ENCODE measurements at regions of chr11 and their contacts with region 1.

Region 1: DNA sequence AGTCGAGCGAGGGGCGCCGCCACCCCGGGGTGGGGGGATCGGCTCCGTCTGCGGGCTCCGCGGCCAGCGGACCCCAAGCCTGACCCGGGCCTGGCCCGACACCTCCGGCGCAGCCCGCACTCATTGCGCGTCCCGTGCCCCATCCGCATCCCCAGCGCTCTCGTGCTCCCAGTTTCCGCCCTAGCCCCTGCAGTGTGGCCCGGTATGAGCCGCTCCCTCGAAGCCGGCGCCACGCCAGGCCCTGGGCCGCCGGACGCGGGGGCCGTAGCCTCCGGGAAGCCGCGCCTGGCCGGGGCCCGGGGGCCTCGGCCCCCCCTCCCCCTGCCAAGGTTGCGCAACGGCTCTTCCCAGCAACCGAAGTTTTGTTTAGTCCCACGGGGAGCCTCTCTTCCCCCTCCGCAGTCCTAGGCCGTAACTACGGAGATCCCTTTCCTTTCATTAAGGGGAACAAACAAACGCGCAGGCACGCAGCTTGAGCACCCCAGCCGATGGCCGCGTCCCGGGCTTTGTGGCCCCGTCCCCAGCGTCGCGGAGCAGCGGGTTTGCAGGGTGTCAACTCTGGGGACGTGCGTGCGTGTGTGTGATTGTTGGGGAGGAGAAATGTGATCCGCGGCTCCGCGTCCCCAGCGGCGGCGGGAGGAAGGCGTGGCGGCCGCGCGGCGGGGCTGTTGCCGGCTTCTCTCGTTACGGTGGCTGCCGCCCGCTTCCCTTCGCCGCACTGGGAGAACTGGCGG is 883 bp downstream of the HIPK3 start:
- DNase-seq: peak; percentile 72
- H3K4me3 Mint-ChIP-seq: peak overlapping the region; percentile 99
- H3K27ac Mint-ChIP-seq: peak overlapping the region; percentile 99
- H3K4me1 Mint-ChIP-seq: peaks cover 46% of the 10 kb centered on the region
- H3K27me3 Mint-ChIP-seq: peaks cover 2% of the 10 kb centered on the region

Region 2: DNA sequence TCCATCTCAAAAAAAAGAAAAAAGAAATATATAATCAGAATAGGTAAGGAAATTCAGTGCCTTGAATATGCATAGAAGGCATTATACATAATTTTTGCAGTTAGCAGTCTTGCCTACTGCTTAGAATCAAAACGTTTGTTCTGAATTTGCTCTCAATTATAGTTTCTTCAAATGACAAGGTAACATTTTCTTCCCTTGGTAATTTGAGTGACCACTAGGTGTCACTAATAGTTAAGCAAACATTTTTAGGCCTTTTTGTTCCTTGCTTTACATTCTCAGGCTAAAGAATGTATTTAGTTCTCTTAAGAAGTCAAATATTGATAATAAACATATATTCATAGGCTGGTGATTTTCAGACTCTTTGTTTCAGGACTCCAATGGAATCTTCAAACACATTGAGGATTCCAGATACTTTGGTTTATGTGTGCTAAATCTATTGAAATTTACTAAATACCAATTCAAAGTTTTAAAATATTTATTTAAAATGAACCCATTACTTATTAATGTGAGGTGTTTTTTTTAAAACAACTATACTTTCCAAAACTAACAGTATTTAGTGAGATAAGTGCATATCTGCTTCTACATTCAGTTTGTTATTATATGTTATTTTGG is 297.4 kb before region 1 on chr11:
- intact Hi-C with region 1: loop called (anchors 5 kb)
- DNase-seq: no peak
- H3K4me3 Mint-ChIP-seq: no peak overlapping the region
- H3K27ac Mint-ChIP-seq: no peak overlapping the region
- H3K4me1 Mint-ChIP-seq: peaks cover 13% of the 10 kb centered on the region
- H3K27me3 Mint-ChIP-seq: no peaks in the 10 kb centered on the region

Region 3: GRCh38 chr11:33052231-33052630 is 205.8 kb before region 1 on chr11:
- intact Hi-C with region 1: no loop called
- DNase-seq: no peak
- H3K4me3 Mint-ChIP-seq: no peak overlapping the region
- H3K27ac Mint-ChIP-seq: no peak overlapping the region
- H3K4me1 Mint-ChIP-seq: no peaks in the 10 kb centered on the region
- H3K27me3 Mint-ChIP-seq: no peaks in the 10 kb centered on the region

Region 4: GRCh38 chr11:33329705-33330329 is 71.8 kb after region 1 on chr11:
- intact Hi-C with region 1: loop called (anchors 1 kb)
- DNase-seq: no peak
- H3K4me3 Mint-ChIP-seq: no peak overlapping the region
- H3K27ac Mint-ChIP-seq: no peak overlapping the region
- H3K4me1 Mint-ChIP-seq: no peaks in the 10 kb centered on the region
- H3K27me3 Mint-ChIP-seq: no peaks in the 10 kb centered on the region

Region 5: GRCh38 chr11:33773987-33774735 is 516.1 kb after region 1 on chr11 and contains the start of gene FBXO3:
- intact Hi-C with region 1: loop called (anchors 5 kb)
- DNase-seq: peak; percentile 80
- H3K4me3 Mint-ChIP-seq: peak within 1 kb of the TSS; percentile 94
- H3K27ac Mint-ChIP-seq: peak within 1 kb of the TSS; percentile 91
- H3K4me1 Mint-ChIP-seq: peaks cover 37% of the 10 kb centered on the region
- H3K27me3 Mint-ChIP-seq: peaks cover 29% of the 10 kb centered on the region
- total RNA-seq, gene FBXO3: 18.6 and 24.3 TPM in 2 replicates